ENCODE measurements at regions of chr6 and their contacts with region 1.

Region 1: GRCh38 chr6:25223490-25223991 is 55.6 kb upstream of the CARMIL1 start:
- DNase-seq: peak; percentile 57
- H3K27ac ChIP-seq: no peak overlapping the region
- CTCF ChIP-seq: peak; percentile 94

Region 2: DNA sequence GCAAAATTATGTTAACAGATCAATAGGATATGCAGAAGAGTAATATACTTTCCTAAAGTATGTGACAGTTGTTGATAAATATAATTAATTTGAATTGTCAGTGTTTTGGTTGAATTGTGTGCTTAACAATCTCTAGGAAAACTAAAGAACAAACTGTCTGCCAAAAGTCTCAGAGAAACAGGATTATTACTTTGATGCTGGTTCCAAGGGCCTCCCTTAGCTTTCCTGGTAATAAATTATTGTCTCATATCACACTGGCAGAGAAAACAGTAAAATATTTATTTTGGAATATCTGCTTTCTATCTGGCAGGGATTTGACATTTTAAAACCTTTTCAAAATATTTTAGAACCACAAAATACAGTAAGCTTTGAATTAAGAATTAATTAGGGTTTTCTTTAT is 15.5 kb after region 1 on chr6:
- CTCF ChIA-PET with region 1: no interaction called
- POLR2A ChIA-PET with region 1: no interaction called
- DNase-seq: no peak
- H3K27ac ChIP-seq: no peak overlapping the region
- CTCF ChIP-seq: no peak

Region 3: DNA sequence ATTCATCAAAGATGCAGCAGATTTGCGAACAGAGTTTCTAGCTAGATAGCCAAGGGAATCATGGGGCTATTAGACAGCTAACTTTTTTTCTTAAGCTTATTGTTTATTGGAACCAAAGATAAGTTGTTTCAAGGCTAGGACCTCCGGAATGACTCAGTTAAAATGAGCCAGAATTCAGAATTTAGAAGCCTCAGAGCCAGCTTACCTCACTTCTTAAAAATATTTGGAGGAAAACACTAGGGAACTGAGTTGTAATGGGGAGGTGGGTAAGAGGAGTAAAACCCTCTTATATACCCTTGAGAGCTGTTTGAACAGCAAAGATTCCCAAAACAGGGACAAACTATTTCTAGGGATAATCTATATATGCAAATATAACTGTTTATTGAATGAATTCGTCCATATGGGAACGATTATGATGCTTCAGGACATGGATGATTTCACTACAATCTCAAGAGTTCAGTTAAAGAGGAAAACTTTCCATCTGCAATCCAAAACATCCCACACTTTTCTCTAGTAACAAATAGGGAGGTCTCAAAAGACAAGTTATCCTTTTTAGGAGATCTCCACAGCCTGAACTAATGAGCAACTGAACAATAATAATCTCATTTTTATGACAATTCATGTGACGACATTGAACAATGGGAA is 43.0 kb after region 1 on chr6:
- CTCF ChIA-PET with region 1: interaction called, 10 read pairs
- POLR2A ChIA-PET with region 1: no interaction called
- DNase-seq: no peak
- H3K27ac ChIP-seq: no peak overlapping the region
- CTCF ChIP-seq: no peak

Region 4: DNA sequence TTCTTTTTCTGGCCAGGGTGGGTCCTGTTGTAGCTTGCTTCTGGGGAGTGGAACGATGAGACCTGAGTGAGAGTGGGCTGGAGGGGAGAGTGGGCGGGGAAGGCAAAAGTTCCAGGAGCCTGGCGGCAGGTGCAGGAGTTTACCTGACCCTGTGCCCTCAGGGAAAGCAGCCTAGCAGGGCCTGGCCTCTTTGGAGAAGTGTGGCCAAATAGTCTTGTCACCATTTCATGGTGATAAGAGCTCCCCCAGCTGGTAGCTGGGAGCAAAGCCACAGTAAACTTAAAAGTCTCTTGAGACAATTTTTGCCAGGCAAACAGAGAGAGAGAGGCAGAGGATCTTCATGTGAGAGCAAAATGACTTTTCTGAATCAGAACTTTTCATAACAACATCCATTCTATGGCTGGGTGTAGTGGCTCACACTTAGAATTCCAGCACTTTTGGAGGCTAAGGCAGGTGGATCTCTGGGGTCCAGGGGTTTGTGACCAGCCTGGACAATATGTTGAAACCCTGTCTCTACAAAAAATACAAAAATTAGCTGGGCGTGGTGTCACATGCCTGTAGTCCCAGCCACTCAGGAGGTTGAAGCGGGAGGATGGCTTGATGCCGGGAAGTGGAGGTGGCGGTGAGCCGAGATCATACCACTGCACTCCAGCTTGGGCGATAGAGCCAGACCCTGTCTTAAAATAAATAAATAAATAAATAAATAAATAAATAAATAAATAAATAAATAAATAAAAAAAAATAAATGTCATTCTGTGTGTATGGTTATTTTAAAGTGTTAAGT is 266.7 kb after region 1 on chr6:
- CTCF ChIA-PET with region 1: interaction called, 10 read pairs
- POLR2A ChIA-PET with region 1: no interaction called
- DNase-seq: peak; percentile 60
- H3K27ac ChIP-seq: no peak overlapping the region
- CTCF ChIP-seq: peak; percentile 81

Region 5: GRCh38 chr6:25556516-25556915 is 333.0 kb after region 1 on chr6:
- CTCF ChIA-PET with region 1: interaction called, 19 read pairs
- POLR2A ChIA-PET with region 1: no interaction called
- DNase-seq: peak; percentile 32
- H3K27ac ChIP-seq: no peak overlapping the region
- CTCF ChIP-seq: peak; percentile 91

Region 6: DNA sequence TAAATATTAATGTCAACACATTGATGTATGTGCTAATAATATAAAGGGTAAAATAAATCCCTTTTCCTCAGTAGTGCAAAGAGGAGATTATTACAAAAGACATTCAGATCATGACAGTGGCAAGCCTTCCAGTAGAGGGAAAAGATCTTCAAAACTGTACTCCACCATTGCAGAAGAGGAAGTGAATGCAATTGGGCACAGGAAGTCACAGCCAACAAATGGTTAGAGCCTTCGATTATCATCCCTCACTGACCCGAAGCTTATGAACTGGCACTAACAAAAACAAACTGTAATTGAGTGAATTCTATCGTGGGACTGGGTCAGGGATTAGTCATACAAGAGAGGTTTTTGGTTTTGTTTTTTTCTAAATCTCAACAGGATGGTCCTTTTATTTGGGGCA is 389.1 kb after region 1 on chr6:
- CTCF ChIA-PET with region 1: no interaction called
- POLR2A ChIA-PET with region 1: no interaction called
- DNase-seq: no peak
- H3K27ac ChIP-seq: no peak overlapping the region
- CTCF ChIP-seq: no peak